HepG2 (cell line): ENCODE measurements at regions of chr17 and their contacts with region 1.

Region 1: GRCh38 chr17:75524953-75525719 is at the start of gene LLGL2:
- DNase-seq: peak; percentile 83
- ATAC-seq: peak; percentile 81
- H3K4me3 ChIP-seq: peak within 1 kb of the TSS; percentile 85 to 95 (median 86)
- H3K27ac ChIP-seq: peak within 1 kb of the TSS; percentile 72
- H3K4me1 ChIP-seq: peaks cover 21% of the 10 kb centered on the region
- H3K27me3 ChIP-seq: no peaks in the 10 kb centered on the region
- CTCF ChIP-seq: peak; percentile 88
- EP300 ChIP-seq: peak in 1 of 2 experiments; percentile 32; a peak in 2 of 4 replicates
- POLR2A ChIP-seq: peak in 1 of 2 experiments; percentile 64; a peak in 2 of 4 replicates
- RAD21 ChIP-seq: peak; percentile 87
- total RNA-seq, gene LLGL2: 53.9 and 86.7 TPM in 2 replicates

Region 2: GRCh38 chr17:75450270-75450669 is 74.9 kb before region 1 on chr17:
- CTCF ChIA-PET with region 1: no interaction called
- POLR2A ChIA-PET with region 1: no interaction called
- in situ Hi-C with region 1: no loop called
- intact Hi-C with region 1: no loop called
- DNase-seq: no peak
- ATAC-seq: no peak
- H3K4me3 ChIP-seq: no peak overlapping the region
- H3K27ac ChIP-seq: no peak overlapping the region
- H3K4me1 ChIP-seq: peaks cover 86% of the 10 kb centered on the region
- H3K27me3 ChIP-seq: no peaks in the 10 kb centered on the region
- CTCF ChIP-seq: no peak
- EP300 ChIP-seq: no peak
- POLR2A ChIP-seq: no peak
- RAD21 ChIP-seq: no peak

Region 3: DNA sequence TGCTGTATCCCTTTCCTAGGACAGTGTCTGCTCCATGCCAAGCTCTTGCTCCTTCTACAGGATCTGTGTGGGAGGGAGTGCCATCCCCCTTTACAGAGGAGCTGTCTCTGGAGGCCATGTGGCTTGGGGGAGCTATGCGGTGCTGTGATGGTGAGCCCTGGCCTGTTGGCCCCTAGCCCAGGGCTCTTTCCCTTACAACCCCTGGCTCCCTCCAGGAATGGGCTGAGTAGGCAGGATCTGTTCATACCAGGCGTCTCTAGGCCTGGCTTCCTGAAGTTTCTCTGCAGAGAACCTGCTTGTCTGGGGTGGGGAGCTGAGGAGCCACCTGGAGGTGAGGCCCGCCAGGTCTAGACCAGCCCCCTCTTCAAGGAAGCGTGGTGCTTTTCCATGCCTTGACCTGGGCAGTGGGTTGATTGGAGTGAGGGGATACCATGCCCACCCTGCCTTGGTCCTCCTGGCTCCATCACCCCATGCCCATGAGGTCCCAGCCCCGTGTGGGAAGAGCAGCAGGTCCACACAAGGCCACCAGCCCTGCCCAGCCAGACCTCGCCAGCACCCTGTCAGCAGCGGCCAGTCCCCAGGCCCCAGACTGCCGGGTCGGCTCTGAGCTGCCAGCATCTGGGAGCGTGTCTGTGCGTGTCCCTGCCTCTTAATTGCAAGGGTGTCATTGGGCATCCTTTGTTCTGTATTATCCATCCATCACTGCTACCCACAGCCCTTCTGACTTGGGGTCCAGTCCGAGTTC is 15.0 kb after region 1 on chr17:
- CTCF ChIA-PET with region 1: no interaction called
- POLR2A ChIA-PET with region 1: interaction called, 12 read pairs
- in situ Hi-C with region 1: no loop called
- intact Hi-C with region 1: no loop called
- DNase-seq: no peak
- ATAC-seq: peak; percentile 43
- H3K4me3 ChIP-seq: no peak overlapping the region
- H3K27ac ChIP-seq: peak overlapping the region; percentile 47
- H3K4me1 ChIP-seq: peaks cover 66% of the 10 kb centered on the region
- H3K27me3 ChIP-seq: no peaks in the 10 kb centered on the region
- CTCF ChIP-seq: no peak
- EP300 ChIP-seq: no peak
- POLR2A ChIP-seq: no peak
- RAD21 ChIP-seq: no peak

Region 4: GRCh38 chr17:75549221-75550138 is 24.3 kb after region 1 on chr17:
- CTCF ChIA-PET with region 1: no interaction called
- POLR2A ChIA-PET with region 1: interaction called, 20 read pairs
- in situ Hi-C with region 1: no loop called
- intact Hi-C with region 1: loop called (anchors 1 kb)
- DNase-seq: peak; percentile 89
- ATAC-seq: peak; percentile 88
- H3K4me3 ChIP-seq: peak overlapping the region; percentile 43 to 72 (median 55); a peak in 5 of 6 replicates
- H3K27ac ChIP-seq: peak overlapping the region; percentile 66
- H3K4me1 ChIP-seq: peaks cover 59% of the 10 kb centered on the region
- H3K27me3 ChIP-seq: no peaks in the 10 kb centered on the region
- CTCF ChIP-seq: peak; percentile 44
- EP300 ChIP-seq: peak in 1 of 2 experiments; percentile 43; a peak in 2 of 4 replicates
- POLR2A ChIP-seq: peak; percentile 59 to 88; a peak in 3 of 4 replicates
- RAD21 ChIP-seq: 0 out of 2 replicates have a peak, but pooled peaks have one; percentile 13

Region 5: DNA sequence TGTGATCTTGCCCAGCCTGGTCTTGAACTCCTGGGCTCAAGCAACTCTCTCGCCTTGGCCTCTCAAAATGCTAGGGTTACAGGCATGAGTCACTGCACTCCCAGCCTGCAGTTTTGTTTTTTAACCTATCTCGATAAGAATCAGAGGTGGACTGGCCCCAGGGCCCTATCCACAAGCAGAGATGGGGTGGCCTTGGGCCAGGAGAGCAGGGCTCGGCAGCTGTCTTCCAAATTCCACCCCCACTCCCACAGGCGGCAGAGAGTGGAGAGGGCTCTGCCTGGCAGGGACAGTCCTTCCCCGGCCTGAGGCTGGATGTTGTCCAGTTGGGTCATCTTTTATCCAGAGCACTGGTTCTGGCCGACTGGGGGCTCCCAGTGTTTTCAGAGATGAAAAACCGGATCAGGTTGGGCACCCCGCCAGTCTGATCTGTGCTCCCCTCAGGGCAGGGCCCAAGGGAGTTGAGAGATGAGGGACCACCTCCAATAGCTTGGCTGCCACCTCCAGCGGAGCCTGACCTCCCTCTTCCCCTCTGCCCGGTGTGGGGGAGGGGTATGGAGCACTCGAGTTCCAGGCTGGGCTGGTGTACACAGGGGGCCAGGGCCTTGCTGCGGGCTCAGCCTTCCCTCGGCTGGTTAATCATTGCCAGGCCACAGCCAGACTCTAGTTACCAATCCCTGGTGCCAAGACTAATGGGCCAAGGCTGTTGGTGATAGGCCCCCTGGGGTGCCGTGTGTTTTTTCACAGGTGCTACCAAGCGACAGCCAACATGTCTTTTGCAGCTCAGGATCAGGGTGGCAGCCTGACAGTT is 32.1 kb after region 1 on chr17:
- CTCF ChIA-PET with region 1: no interaction called
- POLR2A ChIA-PET with region 1: interaction called, 20 read pairs
- in situ Hi-C with region 1: no loop called
- intact Hi-C with region 1: loop called (anchors 1 kb)
- DNase-seq: peak; percentile 98
- ATAC-seq: peak; percentile 89
- H3K4me3 ChIP-seq: peak overlapping the region; percentile 32 to 69 (median 39)
- H3K27ac ChIP-seq: peak overlapping the region; percentile 81
- H3K4me1 ChIP-seq: peaks cover 90% of the 10 kb centered on the region
- H3K27me3 ChIP-seq: no peaks in the 10 kb centered on the region
- CTCF ChIP-seq: peak; percentile 50
- EP300 ChIP-seq: peak in 1 of 2 experiments; percentile 80; a peak in 2 of 4 replicates
- POLR2A ChIP-seq: peak; percentile 50 to 81; a peak in 3 of 4 replicates
- RAD21 ChIP-seq: peak; percentile 62

Region 6: GRCh38 chr17:75568412-75569259 is 43.5 kb after region 1 on chr17:
- CTCF ChIA-PET with region 1: no interaction called
- POLR2A ChIA-PET with region 1: no interaction called
- in situ Hi-C with region 1: no loop called
- intact Hi-C with region 1: no loop called
- DNase-seq: no peak
- ATAC-seq: no peak
- H3K4me3 ChIP-seq: no peak overlapping the region
- H3K27ac ChIP-seq: no peak overlapping the region
- H3K4me1 ChIP-seq: no peaks in the 10 kb centered on the region
- H3K27me3 ChIP-seq: no peaks in the 10 kb centered on the region
- CTCF ChIP-seq: no peak
- EP300 ChIP-seq: no peak
- POLR2A ChIP-seq: no peak
- RAD21 ChIP-seq: no peak

Region 7: GRCh38 chr17:75589012-75589918 is 64.1 kb after region 1 on chr17:
- CTCF ChIA-PET with region 1: interaction called, 4 read pairs
- POLR2A ChIA-PET with region 1: no interaction called
- in situ Hi-C with region 1: no loop called
- intact Hi-C with region 1: loop called (anchors 5 kb)
- DNase-seq: peak; percentile 78
- ATAC-seq: peak; percentile 79
- H3K4me3 ChIP-seq: peak overlapping the region; percentile 36 to 75 (median 72); a peak in 5 of 6 replicates
- H3K27ac ChIP-seq: no peak overlapping the region
- H3K4me1 ChIP-seq: peaks cover 40% of the 10 kb centered on the region
- H3K27me3 ChIP-seq: peaks cover 7 to 15% of the 10 kb centered on the region in 2 experiments; a peak in 4 of 5 replicates
- CTCF ChIP-seq: peak; percentile 69
- EP300 ChIP-seq: 0 out of 4 replicates have a peak, but pooled peaks of 1 of the 2 experiments have one; percentile 8
- POLR2A ChIP-seq: peak in 1 of 2 experiments; percentile 72; a peak in 1 of 4 replicates
- RAD21 ChIP-seq: peak; percentile 81